Left ventricle myocardium inferior (tissue), 1 donor: ENCODE measurements at regions of chr9 and their contacts with region 1.

Region 1: GRCh38 chr9:96327694-96328352 is 25.8 kb upstream of the HSD17B3 start:
- DNase-seq: no peak
- H3K4me3 ChIP-seq: no peak overlapping the region
- H3K27ac ChIP-seq: peak overlapping the region; percentile 6
- H3K4me1 ChIP-seq: peaks cover 5% of the 10 kb centered on the region
- H3K27me3 ChIP-seq: no peaks in the 10 kb centered on the region
- CTCF ChIP-seq: peak; percentile 92

Region 2: DNA sequence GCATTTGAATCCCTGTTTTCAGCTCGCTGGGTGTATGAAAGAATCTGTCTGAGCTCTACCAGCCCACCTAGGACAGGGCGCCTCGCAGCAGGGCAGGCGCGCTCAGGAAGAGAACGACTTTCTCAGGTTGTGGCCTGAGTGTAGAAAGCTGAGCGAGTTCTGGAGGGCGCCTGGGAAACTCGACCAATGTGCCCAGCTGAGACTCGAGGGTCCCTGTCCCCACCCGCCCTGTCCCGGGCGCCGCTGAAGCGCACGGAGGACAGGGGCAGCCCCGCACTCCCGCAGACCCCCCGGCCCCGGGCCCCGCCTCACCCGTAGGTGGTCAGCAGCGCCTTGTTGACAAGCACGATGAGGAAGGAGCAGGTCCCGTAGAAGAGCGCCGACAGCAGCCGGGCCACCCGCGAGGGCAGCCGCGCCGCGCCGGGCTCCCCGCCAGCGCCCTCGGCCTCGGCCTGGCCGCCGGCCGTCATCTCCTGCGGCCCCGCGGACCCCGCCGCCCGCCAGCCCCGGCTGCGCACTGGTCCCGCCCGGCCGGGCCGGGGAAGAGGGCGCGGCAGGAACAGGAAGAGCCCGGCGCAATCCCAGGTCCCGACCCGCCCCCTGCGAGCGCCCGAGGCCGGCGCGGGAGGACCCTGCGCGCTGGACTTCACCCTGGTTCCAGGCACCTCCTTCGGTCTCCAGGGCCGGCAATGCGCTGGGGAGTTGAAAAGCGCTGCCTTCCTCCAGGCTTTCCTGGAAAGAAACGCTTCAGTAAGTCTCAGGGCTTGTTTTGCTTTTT is 55.5 kb after region 1 on chr9 and contains the start of gene SLC35D2:
- intact Hi-C with region 1: no loop called
- DNase-seq: peak; percentile 71
- H3K4me3 ChIP-seq: peak within 1 kb of the TSS; percentile 86
- H3K27ac ChIP-seq: peak within 1 kb of the TSS; percentile 93
- H3K4me1 ChIP-seq: peaks cover 58% of the 10 kb centered on the region
- H3K27me3 ChIP-seq: no peaks in the 10 kb centered on the region
- CTCF ChIP-seq: no peak
- total RNA-seq, gene SLC35D2: 13.9 TPM

Region 3: GRCh38 chr9:96661711-96662110 is 333.9 kb after region 1 on chr9:
- intact Hi-C with region 1: loop called (anchors 10 kb)
- DNase-seq: no peak
- H3K4me3 ChIP-seq: no peak overlapping the region
- H3K27ac ChIP-seq: no peak overlapping the region
- H3K4me1 ChIP-seq: peaks cover 8% of the 10 kb centered on the region
- H3K27me3 ChIP-seq: no peaks in the 10 kb centered on the region
- CTCF ChIP-seq: no peak